CD8-positive, alpha-beta T cell (primary cell): ENCODE measurements at regions of chr4 and their contacts with region 1.

Region 1: DNA sequence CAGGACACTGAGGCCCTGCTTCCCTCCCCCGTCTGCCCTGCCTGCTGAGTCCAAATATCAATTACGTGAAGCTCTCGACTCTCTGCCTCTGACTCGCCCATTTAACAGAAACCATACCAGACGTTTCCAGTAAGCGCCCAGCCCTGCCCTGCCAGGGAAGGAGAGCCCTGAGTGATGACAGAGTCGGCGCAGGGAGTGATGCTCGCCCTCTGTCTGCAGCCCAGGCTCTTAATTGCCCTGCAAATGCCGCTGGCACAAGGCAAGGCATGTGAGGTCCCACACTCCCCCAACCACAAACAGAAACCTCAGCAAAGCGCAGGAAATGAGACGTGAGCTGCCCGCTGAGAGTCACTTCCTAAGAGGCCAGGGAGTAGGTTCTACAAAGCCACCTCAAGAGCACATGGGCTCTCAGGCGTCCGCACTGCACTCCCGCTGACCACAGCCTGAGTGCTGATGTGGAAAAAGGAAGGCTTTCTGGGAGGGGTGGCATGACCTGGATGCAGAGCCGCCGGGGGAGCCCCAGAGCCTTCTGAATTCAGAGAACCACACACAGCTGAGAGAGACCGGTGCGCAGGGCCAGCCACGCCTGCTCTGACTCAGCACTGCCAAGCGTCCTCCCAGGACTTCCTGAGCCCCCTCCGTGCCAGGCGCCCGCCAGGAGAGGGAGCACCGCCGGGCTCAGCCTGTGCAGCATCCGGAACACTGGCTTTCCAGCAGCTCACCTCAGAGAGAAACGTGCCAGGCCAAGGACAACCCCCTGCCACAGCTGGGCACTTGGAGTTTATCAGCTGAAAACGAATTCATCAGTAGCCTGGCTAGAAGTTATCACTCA is 5.3 kb downstream of the ZFYVE28 start:
- DNase-seq: peak; percentile 71 to 98 (median 86)
- ATAC-seq: peak; percentile 77
- H3K4me3 ChIP-seq: peak overlapping the region; percentile 25 to 38
- H3K4me3 Mint-ChIP-seq: peak overlapping the region; percentile 73
- H3K27ac ChIP-seq: peak overlapping the region; percentile 87 to 91
- H3K27ac Mint-ChIP-seq: peak overlapping the region; percentile 97
- H3K4me1 ChIP-seq: peaks cover 62% of the 10 kb centered on the region
- H3K4me1 Mint-ChIP-seq: peaks cover 68% of the 10 kb centered on the region
- H3K27me3 ChIP-seq: peaks cover 4 to 7% of the 10 kb centered on the region in 2 experiments
- H3K27me3 Mint-ChIP-seq: peaks cover 4% of the 10 kb centered on the region
- CTCF ChIP-seq: peak; percentile 31

Region 2: DNA sequence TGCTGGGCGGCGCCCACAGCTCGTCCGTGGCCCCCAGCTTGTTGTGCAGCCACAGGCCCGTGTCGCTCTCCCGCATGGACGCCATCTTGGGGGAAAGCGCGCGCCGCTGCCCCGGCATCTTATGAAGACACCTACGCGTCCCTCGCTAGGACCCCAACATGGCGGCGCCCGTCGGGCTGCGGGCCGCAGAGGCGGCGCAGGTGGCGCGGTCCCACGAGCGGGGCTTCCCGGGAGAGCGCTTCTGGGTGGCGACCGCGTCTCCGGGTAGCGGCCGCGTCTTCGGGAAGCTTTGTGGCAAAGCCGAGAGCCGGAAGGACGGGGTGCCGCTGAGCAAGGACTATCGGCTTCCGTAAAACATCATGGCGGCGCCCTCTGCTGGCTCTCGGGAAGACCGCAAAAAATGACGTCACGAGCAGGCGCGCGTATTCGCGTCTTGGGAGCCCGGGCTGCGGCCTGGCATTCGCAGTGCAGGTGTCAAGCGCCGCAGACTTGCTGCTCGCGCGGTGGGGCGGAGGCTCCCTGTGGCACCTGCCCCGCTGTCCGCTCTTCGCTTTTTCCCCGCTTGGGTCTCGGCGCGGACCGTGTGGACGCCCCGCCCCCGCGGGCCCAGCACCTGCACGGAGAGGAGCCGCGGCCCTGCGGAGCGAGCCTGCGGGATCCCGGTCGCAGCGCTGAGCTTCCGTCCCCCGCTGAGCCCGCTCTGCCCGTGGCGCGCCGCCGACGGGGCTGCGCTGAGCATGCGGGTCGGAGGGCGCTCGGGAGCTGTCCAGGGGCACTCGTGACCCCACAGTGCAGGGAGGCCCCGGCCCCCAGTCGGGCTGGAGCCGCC is 404.0 kb before region 1 on chr4 and contains the start of gene NELFA:
- CTCF ChIA-PET with region 1: no interaction called
- POLR2A ChIA-PET with region 1: interaction called, 3 read pairs
- intact Hi-C with region 1: loop called in 1 of 2 experiments (anchors 2 kb)
- DNase-seq: peak; percentile 86 to 98 (median 96)
- ATAC-seq: peak; percentile 83
- H3K4me3 ChIP-seq: peak within 1 kb of the TSS; percentile 96 to 100
- H3K4me3 Mint-ChIP-seq: peak within 1 kb of the TSS; percentile 92
- H3K27ac ChIP-seq: peak within 1 kb of the TSS; percentile 98 to 99
- H3K27ac Mint-ChIP-seq: peak within 1 kb of the TSS; percentile 96
- H3K4me1 ChIP-seq: peaks cover 18% of the 10 kb centered on the region
- H3K4me1 Mint-ChIP-seq: peaks cover 32% of the 10 kb centered on the region
- H3K27me3 ChIP-seq: no peaks in the 10 kb centered on the region
- H3K27me3 Mint-ChIP-seq: no peaks in the 10 kb centered on the region
- CTCF ChIP-seq: no peak
- total RNA-seq, gene NELFA: 39.0 to 45.8 TPM

Region 3: DNA sequence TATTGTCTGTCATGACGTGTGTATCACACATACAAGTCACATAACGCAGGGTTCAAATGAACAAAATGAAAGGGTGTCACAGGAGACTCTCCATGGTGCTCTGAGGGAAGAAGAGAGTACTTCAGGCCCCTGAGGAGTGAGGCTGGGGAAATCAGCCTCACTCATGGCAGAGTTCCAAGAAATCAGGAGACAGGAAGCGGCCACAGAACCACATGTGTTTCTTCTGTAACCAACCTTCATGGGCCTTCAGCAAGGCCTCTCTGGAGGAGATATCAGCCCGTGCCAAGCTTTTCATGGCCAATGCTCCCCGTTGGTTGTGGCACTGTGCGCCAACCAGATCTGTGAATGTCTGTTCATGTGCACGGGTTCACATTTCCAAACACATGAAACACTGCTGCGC is 278.0 kb before region 1 on chr4:
- CTCF ChIA-PET with region 1: no interaction called
- POLR2A ChIA-PET with region 1: no interaction called
- intact Hi-C with region 1: no loop called
- DNase-seq: peak in 6 of 9 experiments; percentile 6 to 66 (median 40)
- ATAC-seq: peak; percentile 71
- H3K4me3 ChIP-seq: no peak overlapping the region
- H3K4me3 Mint-ChIP-seq: peak overlapping the region; percentile 24
- H3K27ac ChIP-seq: no peak overlapping the region
- H3K27ac Mint-ChIP-seq: no peak overlapping the region
- H3K4me1 ChIP-seq: peaks cover 16% of the 10 kb centered on the region
- H3K4me1 Mint-ChIP-seq: peaks cover 18% of the 10 kb centered on the region
- H3K27me3 ChIP-seq: no peaks in the 10 kb centered on the region
- H3K27me3 Mint-ChIP-seq: no peaks in the 10 kb centered on the region
- CTCF ChIP-seq: no peak

Region 4: GRCh38 chr4:2290974-2291704 is 122.0 kb before region 1 on chr4:
- CTCF ChIA-PET with region 1: interaction called, 4 read pairs
- POLR2A ChIA-PET with region 1: interaction called, 17 read pairs
- intact Hi-C with region 1: loop called in 1 of 2 experiments (anchors 1 kb)
- DNase-seq: peak in 8 of 9 experiments; percentile 61 to 96 (median 81)
- ATAC-seq: peak; percentile 88
- H3K4me3 ChIP-seq: peak overlapping the region; percentile 19 to 29
- H3K4me3 Mint-ChIP-seq: peak overlapping the region; percentile 64
- H3K27ac ChIP-seq: peak overlapping the region; percentile 80 to 81
- H3K27ac Mint-ChIP-seq: peak overlapping the region; percentile 98
- H3K4me1 ChIP-seq: peaks cover 72% of the 10 kb centered on the region
- H3K4me1 Mint-ChIP-seq: peaks cover 56% of the 10 kb centered on the region
- H3K27me3 ChIP-seq: no peaks in the 10 kb centered on the region
- H3K27me3 Mint-ChIP-seq: no peaks in the 10 kb centered on the region
- CTCF ChIP-seq: no peak

Region 5: GRCh38 chr4:2393353-2394270 is 19.5 kb before region 1 on chr4:
- CTCF ChIA-PET with region 1: interaction called, 10 read pairs
- POLR2A ChIA-PET with region 1: interaction called, 3 read pairs
- intact Hi-C with region 1: no loop called
- DNase-seq: peak in 4 of 9 experiments; percentile 21 to 65 (median 40)
- ATAC-seq: peak; percentile 47
- H3K4me3 ChIP-seq: peak overlapping the region; percentile 1 to 23
- H3K4me3 Mint-ChIP-seq: peak overlapping the region; percentile 61
- H3K27ac ChIP-seq: no peak overlapping the region
- H3K27ac Mint-ChIP-seq: no peak overlapping the region
- H3K4me1 ChIP-seq: peaks cover 12% of the 10 kb centered on the region
- H3K4me1 Mint-ChIP-seq: peaks cover 33% of the 10 kb centered on the region
- H3K27me3 ChIP-seq: no peaks in the 10 kb centered on the region
- H3K27me3 Mint-ChIP-seq: peaks cover 7% of the 10 kb centered on the region
- CTCF ChIP-seq: no peak

Region 6: DNA sequence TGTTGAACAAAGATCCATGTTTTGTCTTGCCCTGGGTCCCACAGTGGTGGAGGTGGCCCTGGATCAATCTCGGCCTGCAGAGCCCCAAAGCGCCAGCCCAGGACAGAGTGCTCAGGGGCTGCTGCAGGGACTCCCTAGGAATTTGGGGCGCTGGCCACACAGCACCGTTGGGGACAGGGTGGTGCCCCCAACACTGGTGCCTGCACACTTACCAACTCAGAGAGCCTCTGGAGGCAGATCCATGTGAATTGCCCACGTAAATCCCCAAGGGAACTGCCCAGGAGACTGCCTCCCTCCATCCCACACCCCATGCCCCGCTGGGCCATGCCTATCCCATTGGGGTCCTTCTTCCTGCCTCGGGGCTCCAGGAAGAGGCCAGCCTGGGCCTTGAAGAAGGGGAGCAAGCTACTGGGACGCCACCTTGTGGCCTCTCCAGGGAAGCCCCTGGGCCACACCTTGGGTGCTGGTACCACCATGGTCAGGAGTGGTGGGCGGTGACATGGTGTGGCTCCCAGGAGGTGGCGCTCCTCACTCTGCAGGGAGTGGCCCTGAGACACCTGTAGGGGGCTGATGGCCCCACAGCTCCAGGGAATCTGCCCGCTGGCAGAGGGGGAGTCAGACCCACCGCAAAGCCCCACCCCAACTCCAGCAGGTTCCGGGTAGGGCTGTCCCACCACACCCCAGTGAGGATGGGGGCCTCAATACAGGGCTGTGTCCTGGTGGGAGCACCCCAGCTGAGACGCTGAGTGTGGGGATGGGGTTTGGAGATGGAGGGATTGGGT is 28.5 kb after region 1 on chr4:
- CTCF ChIA-PET with region 1: interaction called, 3 read pairs
- POLR2A ChIA-PET with region 1: no interaction called
- intact Hi-C with region 1: loop called in 1 of 2 experiments (anchors 2 kb)
- DNase-seq: peak; percentile 44 to 86 (median 76)
- ATAC-seq: peak; percentile 100
- H3K4me3 ChIP-seq: no peak overlapping the region
- H3K4me3 Mint-ChIP-seq: no peak overlapping the region
- H3K27ac ChIP-seq: no peak overlapping the region
- H3K27ac Mint-ChIP-seq: no peak overlapping the region
- H3K4me1 ChIP-seq: peaks cover 8% of the 10 kb centered on the region
- H3K4me1 Mint-ChIP-seq: peaks cover 2% of the 10 kb centered on the region
- H3K27me3 ChIP-seq: no peaks in the 10 kb centered on the region
- H3K27me3 Mint-ChIP-seq: no peaks in the 10 kb centered on the region
- CTCF ChIP-seq: peak; percentile 82